ENCODE measurements at regions of chr2 and their contacts with region 1.

Region 1: GRCh38 chr2:44087036-44087713 is 81.5 kb upstream of the PPM1B start:
- DNase-seq: peak; percentile 92
- H3K4me3 ChIP-seq: peak overlapping the region; percentile 42 to 62
- H3K27ac ChIP-seq: no peak overlapping the region; a peak in 1 of 4 replicates
- H3K4me1 ChIP-seq: peaks cover 0 to 13% of the 10 kb centered on the region in 2 experiments; a peak in 1 of 4 replicates
- H3K27me3 ChIP-seq: no peaks in the 10 kb centered on the region
- CTCF ChIP-seq: peak; percentile 99
- EP300 ChIP-seq: no peak
- RAD21 ChIP-seq: peak; percentile 94

Region 2: DNA sequence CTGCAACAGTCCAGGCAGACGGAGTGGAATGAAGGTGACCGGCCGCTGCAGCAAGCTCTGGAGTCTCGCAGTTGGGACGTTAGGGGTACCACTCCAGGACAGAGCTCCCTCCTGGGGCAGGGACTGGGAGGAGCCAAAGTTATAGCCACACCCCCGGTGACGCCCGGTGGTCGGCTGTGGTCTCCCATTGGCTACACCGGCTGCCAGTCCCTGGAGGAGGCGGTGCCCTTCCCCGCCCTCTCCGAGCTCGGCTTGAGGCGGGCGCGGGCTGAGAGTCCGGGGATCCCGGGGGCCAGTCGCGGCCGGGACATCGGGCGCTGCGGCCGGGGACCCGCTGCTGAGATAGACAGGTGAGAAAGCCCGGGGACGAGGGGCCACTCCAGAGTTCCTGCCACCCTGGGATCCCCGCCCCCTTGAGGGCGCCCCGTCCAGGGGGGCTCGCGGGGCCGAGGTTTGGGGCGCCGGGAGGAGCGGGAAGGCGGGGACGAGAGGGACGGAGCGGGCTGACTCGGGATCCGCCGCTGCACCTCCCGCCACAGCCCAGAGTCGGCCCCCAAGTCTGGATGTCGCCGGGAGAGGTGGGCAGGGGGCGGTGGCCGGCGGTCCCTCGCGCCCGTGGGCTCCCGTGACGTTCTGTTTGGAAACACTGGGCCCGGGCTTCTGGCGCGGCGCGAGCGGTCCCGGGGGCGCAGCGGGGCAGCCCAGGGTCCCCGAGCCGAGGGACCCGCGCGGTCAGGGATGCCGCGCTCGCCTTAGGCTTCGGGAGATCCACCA is 450.0 kb before region 1 on chr2 and contains the start of gene PLEKHH2:
- CTCF ChIA-PET with region 1: no interaction called
- POLR2A ChIA-PET with region 1: no interaction called
- DNase-seq: peak; percentile 100
- H3K4me3 ChIP-seq: peak within 1 kb of the TSS; percentile 76 to 79
- H3K27ac ChIP-seq: no peak within 1 kb of the TSS
- H3K4me1 ChIP-seq: peaks cover 0 to 9% of the 10 kb centered on the region in 2 experiments; a peak in 1 of 4 replicates
- H3K27me3 ChIP-seq: no peaks in the 10 kb centered on the region
- CTCF ChIP-seq: no peak
- EP300 ChIP-seq: no peak
- RAD21 ChIP-seq: no peak
- polyA plus RNA-seq, gene PLEKHH2: 1.9 and 3.1 TPM in 2 replicates

Region 3: DNA sequence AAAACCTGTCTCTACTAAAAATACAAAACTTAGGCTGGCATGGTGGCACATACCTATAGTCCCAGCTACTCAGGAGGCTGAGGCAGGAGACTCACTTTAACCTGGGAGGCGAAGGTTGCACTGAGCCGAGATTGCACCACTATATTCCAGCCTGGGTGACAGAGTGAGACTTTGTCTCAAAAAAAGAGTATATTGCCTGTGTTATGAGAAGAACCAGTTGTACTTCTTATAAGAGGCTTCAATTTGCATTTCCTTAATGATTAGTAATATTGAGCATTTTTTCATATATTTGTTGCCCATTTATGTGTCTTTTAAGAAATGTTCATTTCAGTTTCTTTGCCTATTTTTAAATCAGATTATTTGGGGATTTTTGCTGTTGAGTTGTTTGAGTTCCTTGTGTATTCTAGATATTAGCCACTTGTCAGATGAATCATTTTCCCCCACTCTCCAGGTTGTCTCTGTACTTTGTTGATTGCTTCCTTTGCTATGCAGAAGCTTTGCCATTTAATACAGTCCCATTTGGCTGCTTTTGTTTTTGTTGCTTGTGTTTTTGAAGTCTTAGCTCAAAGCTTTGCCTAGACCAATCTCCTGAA is 15.6 kb before region 1 on chr2:
- CTCF ChIA-PET with region 1: interaction called, 30 read pairs
- POLR2A ChIA-PET with region 1: no interaction called
- DNase-seq: no peak
- H3K4me3 ChIP-seq: no peak overlapping the region
- H3K27ac ChIP-seq: no peak overlapping the region
- H3K4me1 ChIP-seq: no peaks in the 10 kb centered on the region; a peak in 1 of 4 replicates
- H3K27me3 ChIP-seq: no peaks in the 10 kb centered on the region; the same call in 1 of the 2 replicates
- CTCF ChIP-seq: no peak
- EP300 ChIP-seq: no peak
- RAD21 ChIP-seq: no peak

Region 4: GRCh38 chr2:44098050-44098449 is 10.9 kb after region 1 on chr2:
- CTCF ChIA-PET with region 1: interaction called, 25 read pairs
- POLR2A ChIA-PET with region 1: no interaction called
- DNase-seq: no peak
- H3K4me3 ChIP-seq: no peak overlapping the region
- H3K27ac ChIP-seq: no peak overlapping the region
- H3K4me1 ChIP-seq: peaks cover 0 to 4% of the 10 kb centered on the region in 2 experiments; a peak in 3 of 4 replicates
- H3K27me3 ChIP-seq: no peaks in the 10 kb centered on the region
- CTCF ChIP-seq: no peak
- EP300 ChIP-seq: no peak
- RAD21 ChIP-seq: no peak

Region 5: GRCh38 chr2:44244129-44244871 is 157.1 kb after region 1 on chr2:
- CTCF ChIA-PET with region 1: interaction called, 21 read pairs
- POLR2A ChIA-PET with region 1: no interaction called
- DNase-seq: peak; percentile 75
- H3K4me3 ChIP-seq: peak overlapping the region; percentile 43 to 55
- H3K27ac ChIP-seq: no peak overlapping the region
- H3K4me1 ChIP-seq: peaks cover 3 to 5% of the 10 kb centered on the region in 2 experiments; a peak in 2 of 4 replicates
- H3K27me3 ChIP-seq: no peaks in the 10 kb centered on the region
- CTCF ChIP-seq: peak; percentile 70
- EP300 ChIP-seq: no peak
- RAD21 ChIP-seq: peak; percentile 72

Region 6: DNA sequence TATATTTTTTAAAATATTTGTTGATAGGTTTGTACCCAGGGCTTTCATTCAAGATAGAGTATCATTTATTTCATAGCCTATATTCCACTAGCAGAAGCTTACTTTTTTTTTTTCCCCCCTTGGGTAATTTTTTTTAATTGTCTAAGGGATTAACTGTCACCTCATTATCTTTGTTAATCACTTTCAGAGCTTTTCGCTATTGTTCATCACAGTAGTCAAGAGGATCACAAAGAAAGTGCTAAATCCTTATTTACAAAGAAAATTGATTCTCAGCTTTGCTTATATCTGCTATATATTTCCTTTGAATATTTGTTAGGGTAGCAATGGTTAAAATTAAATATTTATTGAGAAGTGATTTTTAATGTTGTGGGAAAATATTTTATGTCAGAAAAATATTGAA is 333.6 kb after region 1 on chr2:
- CTCF ChIA-PET with region 1: no interaction called
- POLR2A ChIA-PET with region 1: no interaction called
- DNase-seq: no peak
- H3K4me3 ChIP-seq: no peak overlapping the region
- H3K27ac ChIP-seq: no peak overlapping the region
- H3K4me1 ChIP-seq: no peaks in the 10 kb centered on the region
- H3K27me3 ChIP-seq: no peaks in the 10 kb centered on the region
- CTCF ChIP-seq: no peak
- EP300 ChIP-seq: no peak
- RAD21 ChIP-seq: no peak